ENCODE measurements at regions of chr6 and their contacts with region 1.

Region 1: DNA sequence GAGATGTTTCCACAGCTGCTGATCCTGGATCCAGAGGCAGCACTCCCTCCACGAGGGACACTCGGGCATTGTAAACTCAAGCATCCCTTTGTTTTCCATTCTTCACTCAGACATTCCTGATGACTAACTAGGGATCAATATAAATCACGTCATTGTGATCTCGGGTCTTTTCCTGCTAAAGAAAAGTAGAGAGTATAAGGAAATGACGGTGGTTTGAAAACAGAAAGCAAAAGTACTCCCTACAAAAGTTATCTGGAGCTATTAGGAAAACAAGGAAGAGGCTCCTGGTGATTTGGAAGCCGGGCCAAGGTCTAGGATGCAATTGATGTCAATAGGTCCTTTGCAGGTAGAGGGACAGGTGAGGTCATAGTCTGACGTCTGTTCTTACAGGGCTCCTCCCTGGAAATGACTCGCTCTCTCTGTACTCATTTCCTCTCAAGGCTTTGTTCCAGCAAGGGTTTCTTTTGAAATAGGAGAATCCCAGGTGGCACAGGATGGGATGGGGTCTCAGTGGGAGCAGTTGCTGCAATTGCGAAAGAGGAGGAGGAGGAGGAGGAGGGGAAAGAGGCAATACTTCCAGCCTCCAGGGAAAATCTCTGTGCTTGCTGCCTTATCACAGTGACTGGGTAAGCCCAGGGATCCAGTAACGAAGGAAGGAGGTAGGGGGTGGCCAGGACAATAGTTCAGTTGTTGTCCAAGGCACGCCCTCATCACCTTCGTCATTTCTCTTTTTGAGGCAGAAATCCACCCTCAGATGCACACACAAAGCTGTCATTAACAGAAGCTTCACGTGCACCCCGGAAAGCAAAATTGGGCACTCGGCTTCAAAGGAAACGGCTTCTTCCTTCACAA is 222.9 kb downstream of the LY86 start:
- DNase-seq: peak; percentile 98
- ATAC-seq: peak; percentile 82
- H3K4me3 ChIP-seq: peak overlapping the region; percentile 45; the same call in 1 of the 2 replicates
- H3K27ac ChIP-seq: peak overlapping the region; percentile 100
- H3K4me1 ChIP-seq: peaks cover 38% of the 10 kb centered on the region
- H3K27me3 ChIP-seq: no peaks in the 10 kb centered on the region
- CTCF ChIP-seq: no peak

Region 2: GRCh38 chr6:6843057-6843638 is 31.8 kb after region 1 on chr6:
- CTCF ChIA-PET with region 1: no interaction called
- POLR2A ChIA-PET with region 1: no interaction called
- intact Hi-C with region 1: loop called (anchors 2 kb)
- DNase-seq: peak; percentile 82
- ATAC-seq: peak; percentile 94
- H3K4me3 ChIP-seq: no peak overlapping the region
- H3K27ac ChIP-seq: peak overlapping the region; percentile 75
- H3K4me1 ChIP-seq: peaks cover 22% of the 10 kb centered on the region
- H3K27me3 ChIP-seq: no peaks in the 10 kb centered on the region
- CTCF ChIP-seq: no peak; the same call in 1 of the 2 replicates

Region 3: DNA sequence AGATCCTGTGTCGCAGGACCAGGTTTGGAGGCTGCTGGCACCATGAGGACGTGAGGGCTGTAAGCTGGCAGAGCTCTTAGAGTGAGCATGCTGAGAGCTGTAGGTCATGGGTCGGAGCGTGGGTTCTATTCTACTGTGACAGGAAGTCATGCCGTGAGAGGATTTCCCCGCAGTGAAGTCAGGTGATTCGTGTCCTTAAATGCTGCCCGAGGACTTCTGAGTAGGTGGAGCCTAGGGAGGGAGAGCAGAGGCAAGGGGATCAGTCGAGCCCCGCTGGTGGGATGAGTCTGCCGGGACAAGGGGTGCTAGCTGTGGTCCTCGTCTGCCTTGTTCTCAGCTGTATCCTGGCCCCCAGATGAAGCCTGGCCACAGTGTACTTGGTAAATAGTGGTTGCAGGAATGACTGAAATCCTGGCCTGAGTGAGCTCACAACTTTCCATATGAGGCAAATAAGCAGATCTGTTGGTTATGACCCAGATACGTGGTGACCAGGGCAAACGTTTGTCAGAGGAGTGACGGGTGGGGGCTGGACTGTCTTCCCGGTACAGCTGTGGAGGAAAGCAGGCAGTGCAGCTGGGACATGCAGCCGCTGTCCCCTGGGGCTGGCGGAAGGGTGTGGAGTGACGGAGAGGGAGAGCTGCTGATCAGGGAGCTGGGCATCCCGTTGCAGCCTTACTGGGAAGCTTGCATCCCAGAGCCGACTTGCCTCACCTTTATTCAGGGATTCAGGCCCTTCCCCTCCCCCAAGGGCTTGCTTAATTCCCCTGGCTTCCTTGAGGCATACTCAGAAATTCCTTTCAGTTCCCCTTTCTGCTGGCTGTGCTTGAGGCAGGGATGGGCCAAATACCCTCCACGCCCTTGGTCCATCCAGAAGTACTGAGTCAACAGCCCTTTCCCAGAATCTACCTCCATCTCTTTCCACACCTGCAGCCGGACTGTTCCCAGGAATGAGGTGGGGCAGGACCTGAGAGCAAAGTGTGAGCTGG is 45.5 kb after region 1 on chr6:
- CTCF ChIA-PET with region 1: interaction called, 4 read pairs
- POLR2A ChIA-PET with region 1: no interaction called
- intact Hi-C with region 1: loop called (anchors 1 kb)
- DNase-seq: peak; percentile 98
- ATAC-seq: peak; percentile 81
- H3K4me3 ChIP-seq: peak overlapping the region; percentile 36
- H3K27ac ChIP-seq: peak overlapping the region; percentile 96
- H3K4me1 ChIP-seq: peaks cover 29% of the 10 kb centered on the region
- H3K27me3 ChIP-seq: no peaks in the 10 kb centered on the region
- CTCF ChIP-seq: no peak

Region 4: GRCh38 chr6:7051233-7052114 is 240.1 kb after region 1 on chr6:
- CTCF ChIA-PET with region 1: no interaction called
- POLR2A ChIA-PET with region 1: no interaction called
- intact Hi-C with region 1: loop called (anchors 5 kb)
- DNase-seq: peak; percentile 60
- ATAC-seq: peak; percentile 45
- H3K4me3 ChIP-seq: peak overlapping the region; percentile 79
- H3K27ac ChIP-seq: peak overlapping the region; percentile 96
- H3K4me1 ChIP-seq: peaks cover 50% of the 10 kb centered on the region
- H3K27me3 ChIP-seq: no peaks in the 10 kb centered on the region
- CTCF ChIP-seq: no peak

Measured in PC-3 (cell line).